ENCODE measurements at regions of chr10 and their contacts with region 1.

Region 1: GRCh38 chr10:32961895-32962369 is 3.9 kb upstream of the ITGB1 start:
- DNase-seq: no peak
- H3K4me3 ChIP-seq: peak overlapping the region; percentile 12 to 18
- H3K27ac ChIP-seq: peak overlapping the region; percentile 70 to 98
- H3K4me1 ChIP-seq: peaks cover 0 to 50% (median 31%) of the 10 kb centered on the region in 4 donors
- H3K27me3 ChIP-seq: no peaks in the 10 kb centered on the region
- CTCF ChIP-seq: peak in 1 of 2 experiments; percentile 23

Region 2: GRCh38 chr10:32851301-32851700 is 110.6 kb before region 1 on chr10:
- intact Hi-C with region 1: no loop called
- DNase-seq: no peak
- H3K4me3 ChIP-seq: no peak overlapping the region
- H3K27ac ChIP-seq: no peak overlapping the region
- H3K4me1 ChIP-seq: no peaks in the 10 kb centered on the region
- H3K27me3 ChIP-seq: no peaks in the 10 kb centered on the region
- CTCF ChIP-seq: no peak

Region 3: DNA sequence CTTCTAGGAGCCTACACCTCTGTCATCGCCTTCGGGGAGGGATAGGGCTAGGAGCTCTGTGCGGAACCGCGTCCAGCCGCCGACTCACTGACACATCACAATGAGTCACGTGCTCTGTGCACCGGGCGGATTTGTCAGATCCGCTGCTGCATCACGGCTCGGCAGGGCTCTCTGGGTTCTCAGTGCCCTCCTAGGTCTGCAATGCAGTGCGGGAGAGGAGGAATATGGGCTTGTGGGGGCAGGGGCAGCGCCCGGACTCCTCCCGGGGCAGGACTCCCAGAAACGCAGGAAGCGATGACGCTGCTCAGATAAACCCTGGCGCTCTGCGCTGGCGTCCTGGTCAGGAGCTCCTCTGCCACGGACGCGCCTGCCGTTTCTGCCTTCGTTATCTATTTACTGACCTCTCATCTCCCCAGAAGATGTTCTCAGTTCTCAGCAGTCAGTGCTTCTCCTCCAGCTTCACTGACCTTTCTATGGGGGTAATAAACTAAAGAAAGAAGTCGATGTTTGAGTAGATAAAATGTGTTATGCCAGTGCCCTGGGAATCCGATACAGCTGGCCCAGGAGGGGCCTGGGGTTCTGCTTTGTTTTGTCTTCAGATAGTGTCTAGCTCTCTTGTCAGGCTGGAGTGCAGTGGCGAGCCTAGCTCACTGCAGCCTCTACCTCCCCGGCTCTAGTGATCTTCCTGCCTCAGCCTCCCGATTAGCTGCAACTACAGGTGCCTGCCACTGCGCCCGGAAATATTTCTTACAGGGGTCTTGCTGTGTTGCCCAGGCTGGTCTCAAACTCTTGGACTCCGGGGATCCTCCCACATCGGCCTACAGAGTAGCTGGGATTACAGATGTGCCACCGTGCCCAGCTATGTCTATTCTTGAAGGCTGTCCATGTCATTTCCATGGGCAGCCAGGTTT is 18.9 kb after region 1 on chr10:
- intact Hi-C with region 1: loop called (anchors 1 kb)
- DNase-seq: peak; percentile 93 to 95
- H3K4me3 ChIP-seq: peak overlapping the region; percentile 51 to 63
- H3K27ac ChIP-seq: peak overlapping the region; percentile 83 to 90
- H3K4me1 ChIP-seq: peaks cover 0 to 31% (median 15%) of the 10 kb centered on the region in 4 donors
- H3K27me3 ChIP-seq: no peaks in the 10 kb centered on the region
- CTCF ChIP-seq: peak in 1 of 2 experiments; percentile 14

Measured in tibial artery (tissue), 4 donors.